ENCODE measurements at regions of chr1 and their contacts with region 1.

Region 1: GRCh38 chr1:203340112-203340804 is 10.7 kb downstream of the FMOD start:
- DNase-seq: peak; percentile 73
- ATAC-seq: peak; percentile 86

Region 2: DNA sequence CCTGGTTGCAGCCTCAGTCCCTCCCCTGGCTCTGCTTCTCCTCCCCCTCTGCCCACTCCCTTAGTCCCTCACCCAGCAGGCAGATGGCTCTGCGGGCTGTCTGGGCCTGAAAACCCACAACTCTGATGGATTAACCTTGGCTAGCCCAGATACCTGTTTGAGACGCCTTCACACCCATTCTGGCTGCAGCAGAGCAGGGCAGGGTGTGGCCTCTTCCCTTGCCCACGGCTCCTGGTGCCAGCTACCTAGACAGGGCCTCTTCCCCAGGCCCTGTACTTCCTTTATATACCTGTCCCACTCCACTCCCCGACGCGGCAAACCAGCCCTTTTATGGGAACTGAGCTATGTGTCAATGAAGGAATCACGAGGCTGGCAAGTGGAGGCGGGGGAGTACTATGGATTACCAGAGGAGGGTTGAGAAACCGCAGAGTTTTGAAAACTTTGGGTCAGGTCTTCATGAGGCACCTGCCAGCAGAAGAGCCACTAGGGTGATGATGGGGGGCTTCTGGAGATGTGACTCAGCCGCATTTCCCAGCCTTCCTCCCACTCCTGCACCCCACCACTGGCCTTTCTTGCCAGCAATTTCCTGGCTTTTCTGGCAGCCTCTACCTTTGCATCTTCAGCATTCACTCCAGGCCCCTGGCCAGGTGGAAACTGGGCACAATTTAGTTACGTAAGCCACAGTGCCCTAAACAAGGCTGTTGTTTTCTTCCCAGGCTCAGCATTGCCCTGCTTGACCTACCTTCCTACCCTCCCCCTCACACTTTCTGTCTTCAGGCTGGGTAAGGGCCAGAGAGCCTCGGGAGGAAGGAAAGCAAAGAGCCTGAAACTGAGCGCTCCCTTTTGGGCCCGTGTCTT is 153.6 kb before region 1 on chr1 and contains the start of gene CHI3L1:
- intact Hi-C with region 1: no loop called
- DNase-seq: no peak
- ATAC-seq: no peak
- total RNA-seq, gene CHI3L1: 0.46 TPM

Region 3: DNA sequence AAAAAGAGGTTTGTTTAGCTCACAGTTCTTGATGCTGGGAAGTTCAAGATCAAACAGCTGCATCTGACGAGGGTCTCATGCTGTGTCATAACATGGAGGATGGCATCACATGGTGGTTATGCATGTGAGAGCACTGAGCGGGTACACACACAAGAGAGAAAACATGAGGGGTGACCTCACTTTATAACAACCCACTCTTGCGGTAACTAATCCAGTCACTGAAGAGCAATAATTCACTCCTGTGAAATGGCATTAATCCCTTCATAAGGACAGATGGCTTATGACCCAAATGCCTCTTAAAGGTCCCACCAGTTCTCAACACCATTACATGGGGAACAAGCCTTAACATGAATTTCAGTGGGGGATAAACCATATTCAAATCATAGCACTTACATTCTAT is 87.6 kb before region 1 on chr1:
- intact Hi-C with region 1: no loop called
- DNase-seq: no peak
- ATAC-seq: no peak

Region 4: GRCh38 chr1:203267347-203267846 is 72.9 kb before region 1 on chr1:
- intact Hi-C with region 1: loop called (anchors 1 kb)
- DNase-seq: peak; percentile 86
- ATAC-seq: peak; percentile 75

Region 5: GRCh38 chr1:203273206-203273868 is 66.9 kb before region 1 on chr1:
- intact Hi-C with region 1: loop called (anchors 1 kb)
- DNase-seq: peak; percentile 93
- ATAC-seq: peak; percentile 66

Region 6: DNA sequence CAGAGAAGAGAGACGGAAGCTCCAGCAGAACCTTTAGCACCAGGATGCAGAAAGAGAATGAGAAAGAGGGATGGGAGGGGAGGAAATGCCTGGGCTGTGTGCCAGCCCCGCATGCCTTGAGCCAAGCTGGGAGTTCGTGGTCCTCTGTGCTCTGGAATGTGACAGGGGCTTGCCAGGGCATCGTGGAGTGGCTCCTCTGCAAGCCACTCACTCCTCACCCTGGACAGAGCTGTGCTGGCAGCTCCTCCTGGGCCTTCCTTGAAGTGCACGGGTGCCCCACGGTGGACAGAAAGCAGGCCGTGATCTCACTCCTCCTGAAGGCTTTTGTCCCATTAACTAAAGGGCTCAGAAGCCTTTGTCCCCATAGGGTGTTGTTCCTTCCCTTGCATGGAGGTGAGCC is 100.5 kb after region 1 on chr1:
- intact Hi-C with region 1: loop called (anchors 2 kb)
- DNase-seq: peak; percentile 87
- ATAC-seq: peak; percentile 96

Region 7: GRCh38 chr1:203486618-203487370 is 146.5 kb after region 1 on chr1:
- intact Hi-C with region 1: loop called (anchors 2 kb)
- DNase-seq: no peak
- ATAC-seq: peak; percentile 34

Region 8: GRCh38 chr1:203702130-203702577 is 361.9 kb after region 1 on chr1:
- intact Hi-C with region 1: loop called (anchors 5 kb)
- DNase-seq: peak; percentile 68
- ATAC-seq: peak; percentile 53

Measured in Right ventricle myocardium inferior (tissue), 1 donor.